Right cardiac atrium (tissue), 5 donors: ENCODE measurements at regions of chr2 and their contacts with region 1.

Region 1: GRCh38 chr2:111116843-111117597 is 3.7 kb upstream of the BCL2L11 start:
- DNase-seq: peak; percentile 68 to 88 (median 85)
- ATAC-seq: peak; percentile 72 to 77
- H3K4me3 ChIP-seq: peak overlapping the region; percentile 32
- H3K27ac ChIP-seq: no peak overlapping the region
- H3K4me1 ChIP-seq: no peaks in the 10 kb centered on the region
- H3K27me3 ChIP-seq: no peaks in the 10 kb centered on the region

Region 2: DNA sequence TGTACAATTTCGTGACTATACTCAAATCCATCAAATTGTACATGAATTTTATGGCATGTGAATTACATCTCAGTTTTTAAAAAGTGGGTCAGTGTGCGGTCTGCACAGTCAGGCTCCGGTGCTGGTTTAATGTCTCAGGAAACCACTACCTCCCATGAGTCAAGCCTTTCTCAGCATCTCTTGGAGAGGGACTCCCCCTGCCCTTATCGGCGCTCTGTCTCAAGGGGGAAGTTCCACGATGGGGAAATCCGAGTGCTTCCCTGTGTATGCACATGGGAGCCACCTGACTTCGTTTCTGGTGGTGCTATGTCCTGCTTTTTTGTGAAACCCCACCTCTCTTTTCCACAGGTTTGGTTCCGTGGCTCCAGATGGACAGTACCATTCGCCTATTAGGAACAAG is 312.1 kb before region 1 on chr2:
- intact Hi-C with region 1: loop called in 1 of 4 experiments (anchors 10 kb)
- DNase-seq: no peak
- ATAC-seq: no peak
- H3K4me3 ChIP-seq: no peak overlapping the region
- H3K27ac ChIP-seq: no peak overlapping the region
- H3K4me1 ChIP-seq: peaks cover 4% of the 10 kb centered on the region
- H3K27me3 ChIP-seq: no peaks in the 10 kb centered on the region

Region 3: GRCh38 chr2:111030260-111030891 is 86.6 kb before region 1 on chr2:
- intact Hi-C with region 1: no loop called
- DNase-seq: no peak
- ATAC-seq: no peak
- H3K4me3 ChIP-seq: no peak overlapping the region
- H3K27ac ChIP-seq: no peak overlapping the region
- H3K4me1 ChIP-seq: peaks cover 4% of the 10 kb centered on the region
- H3K27me3 ChIP-seq: no peaks in the 10 kb centered on the region

Region 4: DNA sequence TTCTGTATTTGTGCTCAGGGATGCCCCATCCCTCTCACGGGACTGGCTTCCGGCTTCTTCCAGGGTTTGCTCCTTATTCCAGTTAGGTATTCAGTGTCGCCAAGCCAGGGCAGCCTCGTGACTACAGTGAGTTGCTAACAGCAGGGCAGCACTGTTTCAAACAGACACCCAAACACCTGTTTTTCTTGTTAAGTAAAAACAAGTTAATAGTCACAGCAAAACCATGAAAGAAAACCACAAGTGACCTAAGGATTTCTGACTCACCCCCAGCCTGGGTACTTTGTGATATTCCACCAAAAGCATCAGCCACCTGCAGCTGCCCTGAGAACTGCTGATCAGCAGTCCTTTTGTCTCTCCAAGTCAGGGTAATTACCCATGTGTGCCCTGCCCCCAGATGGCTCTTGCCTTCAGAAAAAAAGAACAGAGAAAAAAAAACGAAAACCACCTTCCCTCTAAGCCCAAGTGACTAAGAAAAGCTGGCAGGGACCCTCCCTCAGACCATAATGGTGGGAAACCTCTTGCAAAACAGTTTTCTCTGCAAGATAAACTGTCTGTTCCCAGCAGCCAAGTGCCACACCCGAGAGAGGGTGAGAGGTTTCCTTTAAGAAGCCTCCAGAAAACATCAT is 588.8 kb after region 1 on chr2:
- intact Hi-C with region 1: loop called in 1 of 4 experiments (anchors 10 kb)
- DNase-seq: no peak
- ATAC-seq: peak in 1 of 2 donors; percentile 13
- H3K4me3 ChIP-seq: no peak overlapping the region
- H3K27ac ChIP-seq: no peak overlapping the region
- H3K4me1 ChIP-seq: peaks cover 2% of the 10 kb centered on the region
- H3K27me3 ChIP-seq: no peaks in the 10 kb centered on the region